Activated CD8-positive, alpha-beta T cell treated with anti-CD3 and anti-CD28 coated beads, Interleukin-2, amount 10 ng/mL, durations not matched to agents 7 days and 5 days (primary cell): ENCODE measurements at regions of chr19 and their contacts with region 1.

Region 1: DNA sequence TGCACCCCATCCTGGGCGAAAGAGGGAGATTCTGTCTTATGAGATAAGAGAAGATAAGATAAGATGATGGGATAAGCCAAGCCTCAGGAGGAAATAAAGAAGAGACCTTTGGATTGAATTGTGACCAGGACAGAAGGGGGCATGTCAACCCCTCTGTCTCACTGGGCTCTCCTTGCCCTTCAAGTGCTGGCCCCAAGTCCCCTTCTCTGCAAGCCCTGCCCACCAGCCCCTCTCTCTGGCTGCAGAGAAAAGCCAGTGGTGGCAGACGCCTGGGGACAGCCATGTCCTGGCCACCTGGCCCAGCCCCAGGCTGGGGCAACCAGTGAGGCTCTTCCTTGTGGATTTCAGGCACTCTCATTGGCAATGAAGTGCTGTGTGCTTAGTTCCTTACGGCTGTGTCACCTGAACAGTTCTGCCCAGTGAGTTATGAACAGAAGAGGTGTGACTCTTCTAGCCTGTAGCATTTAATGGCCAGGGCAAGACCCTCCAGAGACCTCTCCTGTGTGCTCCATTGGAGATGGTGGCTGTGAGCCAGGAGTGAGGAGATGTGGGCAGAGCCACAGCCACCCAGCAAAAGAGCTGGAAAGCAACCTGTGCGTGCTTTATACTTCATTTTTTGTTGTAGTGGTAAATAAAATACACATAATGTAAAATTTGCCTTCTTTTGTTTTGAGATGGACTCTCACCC is 6.1 kb upstream of the BTBD2 start:
- DNase-seq: no peak
- ATAC-seq: no peak
- H3K4me3 Mint-ChIP-seq: no peak overlapping the region
- H3K27ac Mint-ChIP-seq: no peak overlapping the region
- H3K4me1 Mint-ChIP-seq: peaks cover 4% of the 10 kb centered on the region
- H3K27me3 Mint-ChIP-seq: peaks cover 3% of the 10 kb centered on the region

Region 2: GRCh38 chr19:1863726-1864480 is 157.7 kb before region 1 on chr19:
- CTCF ChIA-PET with region 1: no interaction called
- POLR2A ChIA-PET with region 1: no interaction called
- DNase-seq: peak; percentile 95
- ATAC-seq: peak; percentile 73
- H3K4me3 Mint-ChIP-seq: peak overlapping the region; percentile 75
- H3K27ac Mint-ChIP-seq: peak overlapping the region; percentile 85
- H3K4me1 Mint-ChIP-seq: peaks cover 53% of the 10 kb centered on the region
- H3K27me3 Mint-ChIP-seq: no peaks in the 10 kb centered on the region

Region 3: DNA sequence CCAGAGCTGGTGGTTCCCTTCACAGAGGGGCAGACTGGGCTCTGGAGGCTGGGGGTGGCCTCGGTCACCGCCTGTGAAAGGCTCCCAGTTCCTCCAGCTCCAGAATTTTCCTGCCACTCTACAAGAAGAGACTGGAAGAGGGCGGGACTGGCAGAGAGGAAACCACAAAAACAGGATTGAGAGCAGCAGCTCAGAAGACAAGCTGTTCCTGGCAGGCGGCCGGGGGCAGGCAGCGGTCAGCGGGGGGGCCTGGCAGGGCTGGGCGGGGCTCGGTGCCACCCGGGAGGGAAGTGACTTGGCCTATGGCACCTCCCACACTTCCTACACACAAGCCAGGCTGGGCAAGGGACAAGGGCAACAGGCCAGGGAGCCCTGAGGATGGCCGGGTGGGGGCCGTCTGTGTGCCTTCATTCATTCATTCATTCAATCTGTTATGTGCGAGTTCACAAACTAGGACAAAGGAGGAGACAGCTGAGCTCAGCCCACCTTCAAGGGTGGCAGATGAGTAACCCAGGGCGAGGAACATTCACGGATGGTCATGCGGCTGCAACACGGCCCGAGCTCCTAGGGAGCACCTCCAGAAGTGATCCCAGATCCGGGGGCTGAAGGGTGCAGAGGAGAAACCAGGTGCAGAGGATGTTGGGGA is 10.8 kb after region 1 on chr19:
- CTCF ChIA-PET with region 1: interaction called, 14 read pairs
- POLR2A ChIA-PET with region 1: no interaction called
- DNase-seq: peak; percentile 59
- ATAC-seq: peak; percentile 51
- H3K4me3 Mint-ChIP-seq: peak overlapping the region; percentile 66
- H3K27ac Mint-ChIP-seq: peak overlapping the region; percentile 83
- H3K4me1 Mint-ChIP-seq: peaks cover 33% of the 10 kb centered on the region
- H3K27me3 Mint-ChIP-seq: no peaks in the 10 kb centered on the region

Region 4: DNA sequence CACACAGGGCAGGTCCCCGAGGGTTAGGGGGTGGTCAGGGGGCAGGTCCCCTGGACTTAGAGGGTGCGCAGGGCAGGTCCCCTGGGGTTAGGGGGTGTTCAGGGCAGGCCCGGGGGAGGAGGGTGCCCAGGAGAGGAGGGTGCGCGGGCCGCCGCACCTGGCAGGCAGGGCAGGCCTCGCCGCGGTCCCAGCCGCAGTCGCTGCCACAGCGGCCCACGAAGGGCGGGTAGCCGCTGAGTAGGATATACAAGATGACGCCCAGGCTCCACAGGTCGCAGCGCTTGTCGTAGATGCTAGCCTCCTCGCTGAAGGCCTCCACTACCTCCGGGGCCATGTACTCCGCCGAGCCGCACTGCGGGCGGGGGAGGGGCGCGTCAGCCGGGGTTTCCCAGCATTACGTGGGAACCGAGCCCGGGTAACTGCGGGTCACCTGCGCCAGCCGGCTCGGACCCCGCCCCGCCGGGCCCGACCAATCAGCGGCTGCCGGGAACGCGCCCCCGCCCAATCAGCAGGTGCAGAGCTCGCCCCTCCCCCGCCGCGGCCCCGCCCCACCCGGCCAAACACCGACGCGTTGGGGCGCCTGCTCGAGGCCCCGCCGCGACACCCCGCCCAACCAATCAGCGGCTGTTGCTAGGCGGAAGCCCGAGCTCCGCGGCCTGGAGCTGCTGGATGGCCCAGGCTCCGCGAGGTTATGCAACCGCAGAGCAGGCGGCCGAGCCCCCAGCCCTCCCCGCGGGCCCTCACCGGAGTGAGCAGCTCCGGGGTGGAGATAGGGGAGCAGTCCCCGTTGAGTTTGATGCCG is 20.3 kb after region 1 on chr19:
- CTCF ChIA-PET with region 1: interaction called, 15 read pairs
- POLR2A ChIA-PET with region 1: interaction called, 4 read pairs
- DNase-seq: peak; percentile 99
- ATAC-seq: peak; percentile 89
- H3K4me3 Mint-ChIP-seq: peak overlapping the region; percentile 66
- H3K27ac Mint-ChIP-seq: peak overlapping the region; percentile 87
- H3K4me1 Mint-ChIP-seq: peaks cover 29% of the 10 kb centered on the region
- H3K27me3 Mint-ChIP-seq: no peaks in the 10 kb centered on the region